ENCODE measurements at regions of chr22 and their contacts with region 1.

Region 1: DNA sequence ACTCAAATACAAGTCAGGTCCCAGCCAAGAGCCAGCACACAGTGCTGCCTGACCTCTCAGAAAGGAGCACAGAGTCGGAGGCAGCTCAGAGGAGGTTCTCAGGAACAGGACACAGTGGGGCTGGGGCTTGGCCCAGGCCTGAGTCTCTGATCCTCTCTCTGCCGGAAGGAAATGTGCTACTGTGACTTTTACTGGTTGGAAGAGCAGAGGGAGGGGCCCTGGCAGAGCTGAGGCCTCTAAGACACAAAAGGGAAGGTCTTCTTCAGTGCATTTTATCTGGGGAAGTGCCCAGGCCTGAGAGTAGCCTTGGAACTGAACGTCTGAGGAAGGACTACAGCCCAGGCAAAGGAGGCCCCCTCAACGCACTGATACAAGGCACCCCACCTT is 16.2 kb upstream of the CASTOR1 start:
- DNase-seq: peak in 1 of 2 donors; percentile 79
- ATAC-seq: peak; percentile 68 to 79 (median 73)
- H3K4me3 ChIP-seq: peak overlapping the region; percentile 12
- H3K4me3 Mint-ChIP-seq: peak overlapping the region; percentile 79
- H3K27ac ChIP-seq: peak overlapping the region; percentile 71
- H3K27ac Mint-ChIP-seq: peak overlapping the region; percentile 87 to 95
- H3K4me1 ChIP-seq: peaks cover 94% of the 10 kb centered on the region
- H3K4me1 Mint-ChIP-seq: peaks cover 85 to 96% of the 10 kb centered on the region in 2 donors
- H3K27me3 ChIP-seq: no peaks in the 10 kb centered on the region
- H3K27me3 Mint-ChIP-seq: no peaks in the 10 kb centered on the region
- CTCF ChIP-seq: no peak

Region 2: GRCh38 chr22:30132290-30132996 is 173.1 kb before region 1 on chr22:
- intact Hi-C with region 1: no loop called
- DNase-seq: no peak
- ATAC-seq: no peak
- H3K4me3 ChIP-seq: no peak overlapping the region
- H3K4me3 Mint-ChIP-seq: no peak overlapping the region
- H3K27ac ChIP-seq: no peak overlapping the region
- H3K27ac Mint-ChIP-seq: no peak overlapping the region
- H3K4me1 ChIP-seq: no peaks in the 10 kb centered on the region
- H3K4me1 Mint-ChIP-seq: no peaks in the 10 kb centered on the region
- H3K27me3 ChIP-seq: peaks cover 2% of the 10 kb centered on the region
- H3K27me3 Mint-ChIP-seq: peaks cover 0 to 3% of the 10 kb centered on the region in 2 donors
- CTCF ChIP-seq: no peak

Region 3: DNA sequence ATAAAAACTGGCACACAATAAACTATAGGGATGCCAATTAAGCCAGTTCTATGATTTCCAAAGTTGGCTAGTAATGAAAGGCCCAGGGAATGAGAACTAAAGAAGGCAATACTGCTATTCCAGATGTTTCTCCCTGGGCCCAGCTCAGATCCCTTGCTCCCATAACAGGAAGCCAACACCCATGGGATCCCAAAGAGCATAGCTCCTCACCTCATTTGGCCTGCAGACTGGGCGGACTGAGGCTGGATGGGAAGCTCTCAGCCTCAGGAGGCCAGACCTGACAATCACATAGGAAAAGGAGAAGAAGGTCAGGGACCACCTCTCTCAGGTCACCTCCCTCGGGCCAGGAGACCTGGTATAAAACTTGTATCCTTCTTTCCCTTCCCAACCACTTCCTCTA is 15.9 kb after region 1 on chr22:
- intact Hi-C with region 1: loop called (anchors 2 kb)
- DNase-seq: no peak
- ATAC-seq: no peak
- H3K4me3 ChIP-seq: no peak overlapping the region
- H3K4me3 Mint-ChIP-seq: no peak overlapping the region
- H3K27ac ChIP-seq: no peak overlapping the region
- H3K27ac Mint-ChIP-seq: peak overlapping the region; percentile 49 to 60
- H3K4me1 ChIP-seq: peaks cover 80% of the 10 kb centered on the region
- H3K4me1 Mint-ChIP-seq: peaks cover 67 to 91% of the 10 kb centered on the region in 2 donors
- H3K27me3 ChIP-seq: no peaks in the 10 kb centered on the region
- H3K27me3 Mint-ChIP-seq: no peaks in the 10 kb centered on the region
- CTCF ChIP-seq: no peak

Region 4: GRCh38 chr22:30351226-30351625 is 45.7 kb after region 1 on chr22:
- intact Hi-C with region 1: loop called (anchors 5 kb)
- DNase-seq: no peak
- ATAC-seq: no peak
- H3K4me3 ChIP-seq: no peak overlapping the region
- H3K4me3 Mint-ChIP-seq: no peak overlapping the region
- H3K27ac ChIP-seq: no peak overlapping the region
- H3K27ac Mint-ChIP-seq: peak overlapping the region; percentile 82 to 92
- H3K4me1 ChIP-seq: peaks cover 40% of the 10 kb centered on the region
- H3K4me1 Mint-ChIP-seq: peaks cover 61 to 65% of the 10 kb centered on the region in 2 donors
- H3K27me3 ChIP-seq: no peaks in the 10 kb centered on the region
- H3K27me3 Mint-ChIP-seq: no peaks in the 10 kb centered on the region
- CTCF ChIP-seq: no peak

Region 5: DNA sequence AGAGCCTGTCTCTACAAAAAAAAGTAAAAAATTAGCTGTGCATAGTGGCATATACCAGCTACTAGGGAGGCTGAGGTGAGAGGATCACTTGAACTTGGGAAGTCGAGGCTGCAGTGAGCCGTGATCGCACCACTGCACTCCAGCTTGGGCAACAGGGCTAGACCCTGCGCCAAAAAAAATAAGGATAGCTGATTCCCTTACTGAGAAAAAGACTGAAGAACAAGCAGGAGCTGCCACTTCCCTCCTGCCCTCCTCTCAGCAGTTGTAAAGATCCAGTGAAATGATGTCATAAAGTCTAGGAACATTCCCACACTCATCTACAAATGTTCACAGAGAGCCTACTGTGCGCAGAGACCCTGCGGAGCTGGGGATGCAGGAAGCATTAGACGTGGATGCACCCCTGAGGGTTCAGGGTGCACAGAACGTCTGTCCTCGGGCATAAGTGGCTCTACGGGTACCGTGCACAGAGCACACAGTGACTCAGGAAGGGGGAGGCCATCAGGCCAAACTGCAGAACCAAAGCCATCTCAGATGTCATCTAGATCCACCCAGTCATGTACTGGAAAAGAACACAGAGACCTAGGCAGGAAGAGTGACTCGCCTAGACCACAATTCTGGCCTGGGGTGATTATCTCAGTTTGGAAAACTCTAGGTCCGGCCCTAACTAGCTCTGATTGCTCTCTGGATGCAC is 103.0 kb after region 1 on chr22:
- intact Hi-C with region 1: no loop called
- DNase-seq: no peak
- ATAC-seq: no peak
- H3K4me3 ChIP-seq: no peak overlapping the region
- H3K4me3 Mint-ChIP-seq: no peak overlapping the region
- H3K27ac ChIP-seq: no peak overlapping the region
- H3K27ac Mint-ChIP-seq: no peak overlapping the region
- H3K4me1 ChIP-seq: no peaks in the 10 kb centered on the region
- H3K4me1 Mint-ChIP-seq: no peaks in the 10 kb centered on the region
- H3K27me3 ChIP-seq: no peaks in the 10 kb centered on the region
- H3K27me3 Mint-ChIP-seq: no peaks in the 10 kb centered on the region
- CTCF ChIP-seq: no peak

Region 6: DNA sequence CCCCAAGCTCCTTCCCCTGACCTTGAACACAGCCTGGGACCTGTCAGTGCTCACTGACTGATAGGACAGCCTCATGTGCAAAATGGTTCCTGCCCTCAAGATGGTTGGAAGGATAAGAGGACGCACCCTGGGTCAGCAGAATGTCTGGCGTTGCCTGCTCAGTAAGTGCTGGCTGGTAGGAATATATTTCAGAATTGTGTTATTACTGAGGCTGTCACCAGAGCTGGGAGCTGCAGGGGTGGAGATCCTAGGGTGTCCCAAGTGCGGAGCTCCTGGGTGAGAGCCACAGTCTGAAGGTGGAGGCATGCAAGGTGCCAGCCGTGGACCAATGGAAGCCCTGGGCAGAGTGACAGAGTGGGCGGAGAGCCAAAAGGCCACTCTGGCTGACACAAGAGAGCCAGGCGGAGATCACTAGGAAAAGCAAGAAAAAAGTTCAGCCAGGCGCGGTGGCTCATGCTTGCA is 201.0 kb after region 1 on chr22:
- intact Hi-C with region 1: no loop called
- DNase-seq: no peak
- ATAC-seq: no peak
- H3K4me3 ChIP-seq: no peak overlapping the region
- H3K4me3 Mint-ChIP-seq: no peak overlapping the region
- H3K27ac ChIP-seq: no peak overlapping the region
- H3K27ac Mint-ChIP-seq: no peak overlapping the region
- H3K4me1 ChIP-seq: no peaks in the 10 kb centered on the region
- H3K4me1 Mint-ChIP-seq: no peaks in the 10 kb centered on the region
- H3K27me3 ChIP-seq: peaks cover 14% of the 10 kb centered on the region
- H3K27me3 Mint-ChIP-seq: peaks cover 18 to 20% of the 10 kb centered on the region in 2 donors
- CTCF ChIP-seq: no peak